Transverse colon (tissue), 4 donors: ENCODE measurements at regions of chr1 and their contacts with region 1.

Region 1: DNA sequence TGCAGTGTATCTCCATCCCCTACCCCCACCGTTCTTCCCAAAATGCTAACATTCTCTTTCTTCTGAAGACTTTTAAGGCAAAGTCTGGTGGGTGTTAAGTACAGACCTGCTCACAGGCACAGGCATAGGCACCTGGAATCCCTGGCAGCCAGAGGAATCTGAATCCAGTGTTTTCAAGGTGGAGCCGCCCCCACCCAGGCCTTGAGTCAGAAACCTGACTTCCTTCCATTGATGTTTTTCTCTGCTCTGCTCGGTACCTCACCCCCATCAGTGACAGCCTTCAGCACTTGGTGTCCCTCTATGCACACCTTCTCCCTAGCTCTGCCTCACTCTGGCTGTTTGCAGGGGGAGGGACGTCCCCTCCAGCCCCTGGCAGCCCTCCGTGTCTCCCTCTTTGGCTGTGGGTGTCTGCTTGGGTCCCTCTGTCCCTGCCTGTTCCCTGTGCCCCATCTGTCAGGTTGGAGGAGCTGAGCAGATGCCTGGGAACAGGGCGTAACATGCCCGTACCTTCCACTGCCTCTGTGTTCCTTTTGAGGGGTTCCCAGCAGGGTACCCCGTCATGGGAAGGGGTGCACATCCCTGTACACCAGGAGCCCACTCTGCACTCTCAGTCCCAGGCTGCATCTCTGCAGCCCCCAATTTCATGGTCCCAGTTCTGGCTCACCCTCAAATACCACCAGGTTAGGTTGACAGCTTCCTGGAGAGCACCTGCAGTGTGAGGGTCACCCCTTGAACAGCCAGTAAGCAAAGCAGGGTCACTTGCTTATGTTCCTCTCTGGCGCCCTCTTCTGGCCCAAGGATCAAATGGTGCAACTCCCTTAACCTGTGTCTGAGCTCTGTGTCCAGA is 6.7 kb downstream of the NCDN start:
- DNase-seq: peak; percentile 80
- H3K4me3 ChIP-seq: no peak overlapping the region
- H3K27ac ChIP-seq: no peak overlapping the region
- H3K4me1 ChIP-seq: no peaks in the 10 kb centered on the region
- H3K27me3 ChIP-seq: no peaks in the 10 kb centered on the region
- CTCF ChIP-seq: peak; percentile 64 to 83 (median 75)
- EP300 ChIP-seq: no peak
- POLR2A ChIP-seq: no peak

Region 2: DNA sequence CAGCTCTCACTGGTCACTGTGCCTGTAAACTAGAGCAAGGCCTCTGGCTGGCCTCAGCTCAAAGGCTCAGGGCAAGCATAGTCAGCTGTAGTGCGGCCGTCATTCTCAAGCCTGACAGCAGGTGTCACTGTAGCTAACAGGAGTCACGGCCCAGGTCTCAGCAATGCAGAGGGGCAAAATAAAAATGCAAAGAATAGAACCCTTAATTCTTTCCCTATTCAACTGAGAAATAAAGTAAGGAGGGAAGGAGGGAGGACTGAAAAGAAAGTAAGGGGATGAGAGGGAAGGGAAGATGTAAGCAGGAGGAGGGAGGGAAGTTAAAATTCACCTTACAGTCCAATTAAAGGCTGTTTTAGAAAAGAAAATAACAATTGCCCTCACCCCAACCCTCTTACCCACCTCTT is 113.1 kb before region 1 on chr1:
- in situ Hi-C with region 1: loop called (anchors 5 to 25 kb)
- intact Hi-C with region 1: loop called (anchors 5 kb)
- DNase-seq: peak; percentile 79
- H3K4me3 ChIP-seq: no peak overlapping the region
- H3K27ac ChIP-seq: peak overlapping the region in 3 of 4 donors; percentile 48 to 69 (median 51)
- H3K4me1 ChIP-seq: peaks cover 7 to 27% (median 13%) of the 10 kb centered on the region in 4 donors
- H3K27me3 ChIP-seq: no peaks in the 10 kb centered on the region
- CTCF ChIP-seq: peak; percentile 70 to 82 (median 78)
- EP300 ChIP-seq: no peak
- POLR2A ChIP-seq: no peak

Region 3: DNA sequence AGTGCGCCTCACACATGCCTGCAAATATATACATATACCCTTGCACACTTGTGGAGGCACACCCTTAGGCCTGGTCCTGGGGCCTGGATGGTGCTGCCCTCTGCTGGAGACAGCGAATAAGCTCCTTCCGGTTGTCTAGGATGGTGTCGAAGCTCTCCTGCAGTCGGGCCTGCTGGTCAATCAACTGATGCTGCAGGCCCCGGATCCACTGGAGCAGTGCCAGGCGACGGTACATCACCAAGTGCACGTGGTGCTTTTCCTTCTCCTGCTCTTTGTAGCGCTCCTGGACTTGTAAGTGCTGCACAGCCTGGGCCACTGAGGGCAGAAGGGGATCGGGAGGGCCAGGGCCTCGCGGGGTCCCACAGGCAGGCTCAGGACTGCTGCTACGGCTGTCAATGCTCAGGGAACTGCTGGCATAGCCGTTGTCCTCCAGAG is 151.3 kb after region 1 on chr1:
- in situ Hi-C with region 1: loop called in 2 of 4 experiments (anchors 5 to 10 kb)
- intact Hi-C with region 1: no loop called
- DNase-seq: peak; percentile 80
- H3K4me3 ChIP-seq: no peak overlapping the region
- H3K27ac ChIP-seq: no peak overlapping the region
- H3K4me1 ChIP-seq: peaks cover 12 to 38% (median 18%) of the 10 kb centered on the region in 4 donors
- H3K27me3 ChIP-seq: no peaks in the 10 kb centered on the region
- CTCF ChIP-seq: peak; percentile 62 to 89 (median 80)
- EP300 ChIP-seq: no peak
- POLR2A ChIP-seq: no peak

Region 4: DNA sequence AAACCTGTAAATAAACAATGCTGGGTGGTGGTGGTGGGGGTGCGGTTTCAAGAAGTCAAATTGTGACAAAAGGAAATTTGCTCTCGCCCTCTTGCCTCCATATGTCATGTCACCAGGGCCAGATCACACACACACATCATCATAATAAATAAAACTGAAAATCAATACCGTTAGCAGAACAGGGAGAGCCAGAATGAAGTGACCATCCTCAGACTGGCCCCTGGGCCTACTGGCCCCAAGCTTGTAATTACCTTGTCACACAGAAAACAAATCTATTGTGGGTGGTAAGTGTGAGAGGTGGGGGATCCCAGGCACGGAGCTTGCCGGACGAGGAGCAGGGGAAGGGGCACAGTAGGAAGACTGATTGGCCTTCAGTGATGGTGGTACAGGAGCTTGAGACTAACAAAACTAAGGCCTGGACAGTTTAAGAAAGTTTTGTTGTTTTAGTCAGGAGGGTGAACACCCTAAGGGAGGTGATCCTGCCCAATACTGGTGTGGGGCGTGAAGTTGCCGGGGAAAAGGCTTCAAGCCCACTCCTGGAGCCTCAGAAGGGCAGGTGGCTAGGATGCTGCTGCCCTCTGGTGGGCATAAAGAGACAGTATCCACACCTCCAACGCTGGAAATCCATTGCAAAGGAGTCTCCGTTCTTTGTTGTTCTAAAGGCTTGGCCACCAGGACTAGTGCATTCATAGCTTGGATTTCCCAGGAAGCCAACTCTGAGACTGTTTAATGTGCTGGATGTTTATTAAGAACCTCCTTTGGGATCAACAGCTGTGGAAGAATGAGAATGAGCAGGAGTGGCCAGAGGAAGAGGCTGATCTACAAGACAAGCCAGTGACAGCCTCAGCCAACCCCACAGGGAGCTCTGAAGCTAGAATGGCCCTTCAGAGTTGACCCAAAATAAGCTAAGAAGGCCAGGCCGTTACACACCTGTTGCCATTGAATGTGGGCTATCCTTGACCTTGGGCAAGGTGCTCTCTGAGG is 162.5 kb after region 1 on chr1:
- in situ Hi-C with region 1: loop called in 3 of 4 experiments (anchors 5 to 10 kb)
- intact Hi-C with region 1: loop called (anchors 5 kb)
- DNase-seq: peak; percentile 41
- H3K4me3 ChIP-seq: no peak overlapping the region
- H3K27ac ChIP-seq: no peak overlapping the region
- H3K4me1 ChIP-seq: peaks cover 0 to 4% (median 0%) of the 10 kb centered on the region in 4 donors
- H3K27me3 ChIP-seq: no peaks in the 10 kb centered on the region
- CTCF ChIP-seq: peak; percentile 63 to 90 (median 85)
- EP300 ChIP-seq: no peak
- POLR2A ChIP-seq: no peak

Region 5: DNA sequence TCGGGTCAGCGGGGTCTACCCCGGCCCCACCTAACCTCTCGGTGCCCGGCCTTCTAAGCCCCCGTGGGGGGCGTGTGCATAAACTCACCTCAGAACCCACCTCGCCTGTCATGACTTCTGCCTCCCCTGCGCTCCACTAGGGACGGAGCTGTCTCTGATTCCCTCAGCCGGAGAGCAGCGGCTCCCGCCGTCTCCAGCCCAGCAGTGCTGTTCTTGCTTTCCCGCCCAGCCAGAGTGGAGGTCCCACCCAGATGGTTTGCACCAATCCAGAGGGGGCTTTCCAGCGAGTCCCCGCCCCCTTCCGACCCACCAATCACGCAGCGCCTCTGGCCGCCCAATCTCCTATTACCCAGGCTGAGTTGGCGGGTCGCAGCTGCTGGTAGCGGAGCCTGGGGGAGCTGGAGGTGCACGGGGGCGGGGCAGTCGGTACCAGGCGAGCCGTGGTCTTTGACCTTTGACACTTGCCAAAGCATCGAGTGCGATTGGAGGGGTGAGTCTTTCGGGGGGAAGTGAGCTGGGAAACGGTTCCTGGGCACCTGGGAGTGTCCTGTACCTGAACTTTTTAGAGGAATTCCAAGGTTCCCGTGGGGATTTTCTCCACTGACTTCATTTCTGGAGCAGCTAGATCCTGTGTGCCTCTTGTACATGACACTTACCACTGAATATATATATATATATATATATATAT is 205.6 kb after region 1 on chr1 and contains the start of gene CLSPN:
- in situ Hi-C with region 1: loop called in 2 of 4 experiments (anchors 10 kb)
- intact Hi-C with region 1: no loop called
- DNase-seq: peak; percentile 96
- H3K4me3 ChIP-seq: peak within 1 kb of the TSS; percentile 59 to 99 (median 84)
- H3K27ac ChIP-seq: peak within 1 kb of the TSS; percentile 82 to 91 (median 87)
- H3K4me1 ChIP-seq: peaks cover 0 to 6% (median 1%) of the 10 kb centered on the region in 4 donors
- H3K27me3 ChIP-seq: no peaks in the 10 kb centered on the region
- CTCF ChIP-seq: no peak
- EP300 ChIP-seq: no peak
- POLR2A ChIP-seq: no peak
- total RNA-seq, gene CLSPN: 0.79 to 0.82 TPM in 2 of 4 donors, not detected in the others

Region 6: DNA sequence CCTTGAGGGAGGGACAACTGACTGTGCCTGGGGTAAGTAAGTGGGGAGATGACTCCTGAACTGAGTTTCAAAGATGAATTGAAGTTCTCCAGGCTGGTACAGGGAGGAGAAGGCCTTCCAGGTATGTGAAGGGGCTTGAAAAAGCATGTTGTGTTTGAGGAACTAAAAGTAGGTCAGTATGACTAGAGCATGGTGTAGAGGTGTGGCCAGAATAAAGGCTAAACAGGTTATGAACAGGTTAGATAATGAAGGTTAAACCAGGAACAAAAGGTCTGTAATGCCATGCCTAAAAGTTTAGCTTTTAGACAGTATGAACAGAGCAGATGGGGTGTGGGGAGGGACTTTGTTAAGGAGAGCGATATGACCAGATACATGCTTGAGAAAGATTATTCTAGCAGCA is 212.8 kb after region 1 on chr1:
- in situ Hi-C with region 1: loop called in 2 of 4 experiments (anchors 10 kb)
- intact Hi-C with region 1: loop called (anchors 2 kb)
- DNase-seq: no peak
- H3K4me3 ChIP-seq: no peak overlapping the region
- H3K27ac ChIP-seq: no peak overlapping the region
- H3K4me1 ChIP-seq: no peaks in the 10 kb centered on the region
- H3K27me3 ChIP-seq: no peaks in the 10 kb centered on the region
- CTCF ChIP-seq: no peak
- EP300 ChIP-seq: no peak
- POLR2A ChIP-seq: no peak

Region 7: DNA sequence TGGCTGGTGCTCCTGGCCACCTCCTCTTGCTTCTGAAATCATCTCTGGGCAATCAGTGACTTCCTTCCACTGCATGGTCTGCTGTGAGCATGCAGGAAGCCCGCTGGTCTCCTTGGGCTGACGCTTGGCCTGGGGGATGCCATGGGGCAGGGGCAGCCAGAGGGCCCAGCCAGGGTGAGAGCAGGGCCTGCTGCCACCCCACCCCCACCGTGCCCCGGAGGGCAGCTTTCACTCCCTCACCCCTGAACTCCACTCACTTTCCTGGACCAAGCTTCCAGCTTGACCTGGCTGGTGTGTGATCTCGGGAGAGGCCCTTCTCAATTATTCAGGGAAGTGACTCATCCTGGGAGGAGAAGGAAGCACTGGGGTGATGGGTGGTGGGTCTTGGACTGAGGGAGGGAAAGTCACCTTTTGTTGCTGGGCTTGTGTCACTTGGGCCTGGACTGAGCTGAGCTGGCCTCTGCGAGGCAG is 1188.7 kb after region 1 on chr1:
- in situ Hi-C with region 1: no loop called
- intact Hi-C with region 1: no loop called
- DNase-seq: no peak
- H3K4me3 ChIP-seq: no peak overlapping the region
- H3K27ac ChIP-seq: no peak overlapping the region
- H3K4me1 ChIP-seq: no peaks in the 10 kb centered on the region
- H3K27me3 ChIP-seq: peaks cover 3% of the 10 kb centered on the region
- CTCF ChIP-seq: no peak
- EP300 ChIP-seq: no peak
- POLR2A ChIP-seq: no peak